Activated CD4-positive, alpha-beta memory T cell treated with anti-CD3 and anti-CD28 coated beads, Interleukin-2, amount 10 ng/mL, durations not matched to agents 7 days and 5 days (primary cell): ENCODE measurements at regions of chr1 and their contacts with region 1.

Region 1: GRCh38 chr1:205775015-205775716 is at the start of gene RAB29:
- DNase-seq: peak; percentile 92
- H3K4me3 Mint-ChIP-seq: peak within 1 kb of the TSS; percentile 90
- H3K27ac Mint-ChIP-seq: peak within 1 kb of the TSS; percentile 87
- H3K4me1 Mint-ChIP-seq: peaks cover 57% of the 10 kb centered on the region
- H3K27me3 Mint-ChIP-seq: no peaks in the 10 kb centered on the region
- total RNA-seq, gene RAB29: 67.6 to 72.3 TPM

Region 2: DNA sequence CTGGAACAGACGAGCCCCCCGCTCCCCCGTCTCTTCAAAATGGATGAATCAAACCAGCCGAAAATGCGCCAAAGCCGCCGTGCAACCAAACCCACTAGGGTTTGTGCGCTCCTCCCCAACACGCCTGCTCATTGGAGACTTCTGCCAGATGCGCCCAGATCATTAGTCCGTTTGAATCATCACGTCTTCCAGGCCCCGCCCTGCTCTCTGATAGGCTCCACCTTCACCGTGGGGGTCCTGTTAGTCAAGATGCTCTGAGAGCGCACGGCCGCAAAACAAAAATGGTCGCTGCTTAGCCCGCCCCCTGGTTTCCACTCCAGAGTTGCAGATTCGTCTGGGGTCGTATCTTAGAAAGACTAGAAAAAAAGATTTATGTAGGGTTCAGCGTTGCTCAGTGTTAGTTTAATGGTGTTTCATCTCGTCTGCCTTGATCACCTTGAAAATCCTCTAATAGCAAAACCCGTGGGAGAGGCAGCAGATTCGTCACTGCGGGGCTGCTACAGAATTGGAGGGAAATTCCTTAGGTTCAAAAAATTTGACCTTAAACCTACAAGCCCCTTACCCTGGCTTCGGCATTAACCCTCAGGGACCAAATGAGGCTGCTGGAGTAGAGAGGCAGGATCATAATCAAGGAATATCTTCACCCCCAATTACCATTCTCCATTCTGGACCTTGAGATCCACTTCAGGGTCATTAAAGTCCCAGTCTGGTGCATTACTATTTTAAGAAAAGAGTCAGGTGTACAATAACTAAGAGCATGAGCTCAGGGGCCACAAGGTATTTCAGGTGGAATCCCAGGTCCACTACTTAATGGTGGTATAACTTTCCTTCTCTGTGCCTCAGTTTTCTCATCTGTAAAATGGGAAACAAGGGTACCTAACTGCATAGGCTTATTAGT is 24.8 kb before region 1 on chr1 and contains the start of gene NUCKS1:
- CTCF ChIA-PET with region 1: interaction called, 3 read pairs
- POLR2A ChIA-PET with region 1: interaction called, 99 read pairs
- DNase-seq: peak; percentile 97
- H3K4me3 Mint-ChIP-seq: peak within 1 kb of the TSS; percentile 87
- H3K27ac Mint-ChIP-seq: peak within 1 kb of the TSS; percentile 96
- H3K4me1 Mint-ChIP-seq: peaks cover 41% of the 10 kb centered on the region
- H3K27me3 Mint-ChIP-seq: no peaks in the 10 kb centered on the region
- total RNA-seq, gene NUCKS1: 163 to 185 TPM

Region 3: GRCh38 chr1:205760606-205761005 is 14.6 kb before region 1 on chr1:
- CTCF ChIA-PET with region 1: interaction called, 3 read pairs
- POLR2A ChIA-PET with region 1: interaction called, 18 read pairs
- DNase-seq: no peak
- H3K4me3 Mint-ChIP-seq: no peak overlapping the region
- H3K27ac Mint-ChIP-seq: no peak overlapping the region
- H3K4me1 Mint-ChIP-seq: peaks cover 8% of the 10 kb centered on the region
- H3K27me3 Mint-ChIP-seq: no peaks in the 10 kb centered on the region

Region 4: GRCh38 chr1:205812271-205812877 is 37.2 kb after region 1 on chr1:
- CTCF ChIA-PET with region 1: no interaction called
- POLR2A ChIA-PET with region 1: interaction called, 11 read pairs
- DNase-seq: peak; percentile 22
- H3K4me3 Mint-ChIP-seq: peak overlapping the region; percentile 85
- H3K27ac Mint-ChIP-seq: peak overlapping the region; percentile 28
- H3K4me1 Mint-ChIP-seq: peaks cover 46% of the 10 kb centered on the region
- H3K27me3 Mint-ChIP-seq: peaks cover 13% of the 10 kb centered on the region